Activated CD4-positive, alpha-beta memory T cell treated with anti-CD3 and anti-CD28 coated beads, Interleukin-2, amount 10 ng/mL, durations not matched to agents 7 days and 5 days (primary cell): ENCODE measurements at regions of chr9 and their contacts with region 1.

Region 1: DNA sequence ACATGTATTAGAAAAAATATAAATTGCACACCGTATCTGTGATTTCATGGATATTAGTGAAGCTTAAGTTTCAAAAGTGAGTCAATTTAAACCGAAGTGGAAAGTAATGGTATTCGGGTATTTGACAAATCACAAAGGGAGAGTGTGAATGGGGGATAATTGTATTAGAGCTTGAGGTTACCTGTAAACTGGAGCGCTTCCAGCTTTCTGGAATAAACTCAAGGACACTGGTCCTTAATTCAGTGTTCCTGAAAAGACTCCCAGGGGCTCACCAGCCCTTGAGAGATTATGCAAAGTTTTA is 167.2 kb downstream of the SLC28A3 start:
- DNase-seq: no peak
- H3K4me3 Mint-ChIP-seq: no peak overlapping the region
- H3K27ac Mint-ChIP-seq: no peak overlapping the region
- H3K4me1 Mint-ChIP-seq: peaks cover 6% of the 10 kb centered on the region
- H3K27me3 Mint-ChIP-seq: peaks cover 2% of the 10 kb centered on the region

Region 2: DNA sequence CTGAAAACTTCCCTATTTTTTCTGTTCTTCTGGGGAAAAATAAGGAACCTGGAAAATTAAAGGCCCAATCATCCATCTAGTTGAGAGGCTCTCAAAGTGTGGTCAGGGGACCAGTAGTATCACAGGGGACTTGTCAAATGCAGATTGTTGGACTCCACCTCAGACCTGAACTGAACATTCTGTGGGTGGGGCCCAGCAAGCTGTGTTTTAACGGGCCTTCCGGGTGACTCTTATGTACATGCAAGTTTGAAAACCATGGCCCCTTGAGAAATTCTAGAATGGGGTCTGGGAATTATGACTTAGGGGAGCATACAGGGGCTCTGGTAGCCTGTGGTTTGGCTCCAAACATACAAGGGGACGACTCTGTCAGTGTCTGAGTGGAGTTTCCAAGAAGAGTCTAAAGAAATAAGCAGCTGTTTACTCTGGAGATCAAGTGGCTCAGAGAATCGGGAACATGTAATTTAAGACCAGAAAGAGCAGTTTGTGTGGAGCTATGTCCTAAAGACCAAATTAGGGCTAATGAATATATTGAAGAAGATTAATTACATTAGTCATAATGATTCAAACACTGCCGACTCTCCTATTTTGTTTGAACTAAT is 10.2 kb before region 1 on chr9:
- CTCF ChIA-PET with region 1: interaction called, 20 read pairs
- POLR2A ChIA-PET with region 1: interaction called, 3 read pairs
- DNase-seq: no peak
- H3K4me3 Mint-ChIP-seq: no peak overlapping the region
- H3K27ac Mint-ChIP-seq: no peak overlapping the region
- H3K4me1 Mint-ChIP-seq: no peaks in the 10 kb centered on the region
- H3K27me3 Mint-ChIP-seq: peaks cover 23% of the 10 kb centered on the region